ENCODE measurements at regions of chr22 and their contacts with region 1.

Region 1: DNA sequence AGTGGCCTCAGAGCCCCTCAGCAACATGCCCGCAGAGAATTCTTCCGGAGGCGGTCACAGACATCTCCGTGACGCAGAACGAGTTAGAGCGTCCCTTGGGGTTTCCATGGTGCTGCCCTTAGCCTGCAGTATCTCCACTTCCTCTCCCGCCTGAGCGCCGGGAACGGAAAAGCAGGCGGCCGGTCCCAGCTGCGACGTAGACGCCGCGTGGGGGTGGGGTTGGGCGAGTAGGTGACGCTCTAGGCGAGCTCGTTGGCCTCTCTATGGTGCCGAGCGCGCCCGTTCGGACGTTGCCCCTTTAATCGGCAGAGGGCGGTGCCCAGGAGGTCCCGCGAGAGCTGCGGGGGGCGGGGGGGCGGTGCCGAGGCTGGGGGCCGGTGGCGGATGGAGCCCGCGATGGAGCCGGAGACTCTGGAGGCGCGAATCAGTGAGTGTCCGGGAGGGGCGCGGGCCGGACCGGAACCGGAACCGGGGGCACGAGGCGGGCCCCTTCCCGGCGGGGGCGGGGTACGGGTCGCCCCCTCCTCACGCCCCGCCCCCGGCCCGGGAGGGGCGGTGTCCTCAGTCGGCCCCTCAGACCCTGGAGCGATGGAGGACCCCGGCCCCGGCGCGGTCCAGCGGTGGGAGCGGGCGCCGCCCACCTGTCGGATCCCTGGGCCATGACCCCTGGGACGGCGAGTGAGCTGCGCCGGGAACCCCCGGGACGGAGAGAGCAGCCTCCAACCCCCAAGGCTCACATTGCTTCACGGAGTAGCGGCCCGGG is at the start of gene GGA1:
- DNase-seq: peak; percentile 97 to 99 (median 98)
- H3K4me3 ChIP-seq: peak within 1 kb of the TSS; percentile 30 to 85
- H3K4me3 Mint-ChIP-seq: peak within 1 kb of the TSS; percentile 90 to 98 (median 94)
- H3K27ac ChIP-seq: peak within 1 kb of the TSS; percentile 88
- H3K27ac Mint-ChIP-seq: peak within 1 kb of the TSS; percentile 94 to 99 (median 98)
- H3K4me1 ChIP-seq: peaks cover 64% of the 10 kb centered on the region
- H3K4me1 Mint-ChIP-seq: peaks cover 35 to 68% (median 50%) of the 10 kb centered on the region in 4 donors
- H3K27me3 ChIP-seq: no peaks in the 10 kb centered on the region
- H3K27me3 Mint-ChIP-seq: no peaks in the 10 kb centered on the region
- total RNA-seq, gene GGA1: 108 to 109 TPM

Region 2: GRCh38 chr22:37486224-37486845 is 122.3 kb before region 1 on chr22 and contains the start of gene MFNG:
- CTCF ChIA-PET with region 1: interaction called, 16 read pairs
- POLR2A ChIA-PET with region 1: interaction called, 77 read pairs
- intact Hi-C with region 1: loop called (anchors 1 kb)
- DNase-seq: peak; percentile 61 to 84 (median 64)
- H3K4me3 ChIP-seq: peak within 1 kb of the TSS; percentile 85 to 87
- H3K4me3 Mint-ChIP-seq: peak within 1 kb of the TSS; percentile 89 to 98 (median 96)
- H3K27ac ChIP-seq: peak within 1 kb of the TSS; percentile 85
- H3K27ac Mint-ChIP-seq: peak within 1 kb of the TSS; percentile 94 to 98 (median 97)
- H3K4me1 ChIP-seq: peaks cover 63% of the 10 kb centered on the region
- H3K4me1 Mint-ChIP-seq: peaks cover 39 to 87% (median 57%) of the 10 kb centered on the region in 4 donors
- H3K27me3 ChIP-seq: no peaks in the 10 kb centered on the region
- H3K27me3 Mint-ChIP-seq: no peaks in the 10 kb centered on the region
- total RNA-seq, gene MFNG: 213 to 218 TPM

Region 3: DNA sequence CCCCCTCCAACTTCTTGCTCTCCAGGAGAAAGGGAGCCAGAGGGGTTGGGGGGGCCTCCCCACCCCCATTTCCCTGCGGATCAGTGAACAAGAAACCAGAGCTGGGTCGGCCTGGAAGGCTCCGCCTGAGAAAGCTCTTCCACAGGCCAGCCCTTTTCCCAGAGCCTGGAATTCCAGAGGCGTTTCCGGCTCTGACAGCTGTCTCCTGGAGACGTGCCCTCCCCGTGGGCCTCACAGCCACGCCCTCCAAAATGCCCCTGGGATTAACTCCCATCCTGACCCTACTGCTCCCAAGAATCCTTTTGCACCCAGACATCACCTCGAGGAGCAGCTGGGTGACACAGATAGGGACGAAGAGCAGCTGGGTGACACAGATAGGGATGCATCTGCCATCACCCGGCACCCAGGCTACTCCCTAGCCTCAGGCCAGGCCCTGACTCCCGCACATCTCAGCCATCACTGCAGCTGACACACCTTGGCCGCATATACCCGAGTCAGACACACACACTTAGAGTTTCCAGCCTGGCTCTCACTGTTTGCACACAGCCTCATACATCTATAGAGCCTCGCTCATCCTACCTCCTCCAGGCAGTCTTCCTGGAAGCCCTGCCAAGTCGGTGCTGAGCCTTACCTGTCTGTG is 56.0 kb before region 1 on chr22:
- CTCF ChIA-PET with region 1: no interaction called
- POLR2A ChIA-PET with region 1: no interaction called
- intact Hi-C with region 1: no loop called
- DNase-seq: no peak
- H3K4me3 ChIP-seq: no peak overlapping the region
- H3K4me3 Mint-ChIP-seq: no peak overlapping the region
- H3K27ac ChIP-seq: no peak overlapping the region
- H3K27ac Mint-ChIP-seq: no peak overlapping the region
- H3K4me1 ChIP-seq: no peaks in the 10 kb centered on the region
- H3K4me1 Mint-ChIP-seq: no peaks in the 10 kb centered on the region
- H3K27me3 ChIP-seq: no peaks in the 10 kb centered on the region
- H3K27me3 Mint-ChIP-seq: peaks cover 7 to 17% of the 10 kb centered on the region in 2 donors

Region 4: DNA sequence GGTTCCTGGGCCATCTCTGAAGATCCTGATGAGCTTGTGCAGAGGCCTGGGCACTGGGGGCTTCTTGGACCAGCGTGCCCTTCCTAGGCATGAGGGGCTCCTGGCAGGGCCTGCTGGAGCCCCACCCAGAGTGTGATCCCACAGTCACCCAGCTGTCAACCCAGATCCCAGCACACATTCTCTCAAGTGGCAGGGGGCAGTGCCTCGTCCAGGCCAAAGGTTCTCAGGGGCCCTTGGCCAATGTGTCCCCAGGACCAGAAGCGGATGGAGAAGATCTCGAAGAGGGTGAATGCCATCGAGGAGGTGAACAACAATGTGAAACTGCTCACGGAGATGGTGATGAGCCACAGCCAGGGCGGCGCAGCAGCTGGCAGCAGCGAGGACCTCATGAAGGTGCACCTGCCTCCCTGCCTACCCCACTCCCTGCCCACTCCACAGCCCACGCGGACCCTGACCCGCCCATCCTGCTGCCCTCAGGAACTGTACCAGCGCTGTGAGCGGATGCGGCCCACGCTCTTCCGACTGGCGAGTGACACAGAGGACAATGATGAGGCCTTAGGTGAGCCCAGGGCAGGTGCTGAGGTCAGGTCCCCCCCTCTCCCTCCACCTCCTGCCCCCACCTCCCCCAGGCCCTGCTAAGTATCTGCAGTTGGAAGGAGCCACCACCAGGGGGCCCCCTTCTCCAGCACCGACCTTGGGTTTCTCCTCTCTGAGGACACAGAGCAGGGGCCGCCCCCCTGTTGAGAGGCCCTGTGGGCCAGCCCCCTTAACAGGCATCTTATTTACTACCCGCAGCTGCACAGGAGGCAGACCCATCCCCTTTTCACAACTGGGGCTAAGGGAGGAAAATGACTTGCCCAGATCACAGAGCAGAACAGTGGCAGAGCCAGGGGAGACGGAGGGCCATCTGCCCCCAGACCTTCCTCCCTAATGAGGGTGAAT is 14.7 kb after region 1 on chr22:
- CTCF ChIA-PET with region 1: interaction called, 28 read pairs
- POLR2A ChIA-PET with region 1: interaction called, 55 read pairs
- intact Hi-C with region 1: loop called (anchors 1 kb)
- DNase-seq: peak; percentile 72 to 79 (median 75)
- H3K4me3 ChIP-seq: no peak overlapping the region
- H3K4me3 Mint-ChIP-seq: peak overlapping the region in 7 of 8 donors; percentile 9 to 85 (median 60)
- H3K27ac ChIP-seq: peak overlapping the region; percentile 52
- H3K27ac Mint-ChIP-seq: peak overlapping the region; percentile 92 to 97 (median 94)
- H3K4me1 ChIP-seq: peaks cover 52% of the 10 kb centered on the region
- H3K4me1 Mint-ChIP-seq: peaks cover 19 to 53% (median 37%) of the 10 kb centered on the region in 4 donors
- H3K27me3 ChIP-seq: no peaks in the 10 kb centered on the region
- H3K27me3 Mint-ChIP-seq: no peaks in the 10 kb centered on the region

Region 5: GRCh38 chr22:37658133-37659065 is 49.7 kb after region 1 on chr22 and contains the start of gene PDXP:
- CTCF ChIA-PET with region 1: interaction called, 9 read pairs
- POLR2A ChIA-PET with region 1: interaction called, 59 read pairs
- intact Hi-C with region 1: loop called (anchors 1 kb)
- DNase-seq: peak; percentile 98
- H3K4me3 ChIP-seq: peak within 1 kb of the TSS; percentile 27 to 57
- H3K4me3 Mint-ChIP-seq: peak within 1 kb of the TSS; percentile 82 to 94 (median 86)
- H3K27ac ChIP-seq: peak within 1 kb of the TSS; percentile 63
- H3K27ac Mint-ChIP-seq: peak within 1 kb of the TSS; percentile 85 to 98 (median 93)
- H3K4me1 ChIP-seq: peaks cover 33% of the 10 kb centered on the region
- H3K4me1 Mint-ChIP-seq: peaks cover 29 to 49% (median 37%) of the 10 kb centered on the region in 4 donors
- H3K27me3 ChIP-seq: no peaks in the 10 kb centered on the region
- H3K27me3 Mint-ChIP-seq: no peaks in the 10 kb centered on the region
- total RNA-seq, gene PDXP: 7.3 to 9.8 TPM

Region 6: GRCh38 chr22:37745548-37746365 is 137.1 kb after region 1 on chr22:
- CTCF ChIA-PET with region 1: interaction called, 3 read pairs
- POLR2A ChIA-PET with region 1: no interaction called
- intact Hi-C with region 1: loop called (anchors 1 kb)
- DNase-seq: peak; percentile 79 to 86 (median 82)
- H3K4me3 ChIP-seq: peak overlapping the region; percentile 45 to 62
- H3K4me3 Mint-ChIP-seq: peak overlapping the region; percentile 86 to 97 (median 94)
- H3K27ac ChIP-seq: peak overlapping the region; percentile 60
- H3K27ac Mint-ChIP-seq: peak overlapping the region; percentile 82 to 96 (median 92)
- H3K4me1 ChIP-seq: peaks cover 22% of the 10 kb centered on the region
- H3K4me1 Mint-ChIP-seq: peaks cover 6 to 31% (median 25%) of the 10 kb centered on the region in 4 donors
- H3K27me3 ChIP-seq: no peaks in the 10 kb centered on the region
- H3K27me3 Mint-ChIP-seq: no peaks in the 10 kb centered on the region

Region 7: DNA sequence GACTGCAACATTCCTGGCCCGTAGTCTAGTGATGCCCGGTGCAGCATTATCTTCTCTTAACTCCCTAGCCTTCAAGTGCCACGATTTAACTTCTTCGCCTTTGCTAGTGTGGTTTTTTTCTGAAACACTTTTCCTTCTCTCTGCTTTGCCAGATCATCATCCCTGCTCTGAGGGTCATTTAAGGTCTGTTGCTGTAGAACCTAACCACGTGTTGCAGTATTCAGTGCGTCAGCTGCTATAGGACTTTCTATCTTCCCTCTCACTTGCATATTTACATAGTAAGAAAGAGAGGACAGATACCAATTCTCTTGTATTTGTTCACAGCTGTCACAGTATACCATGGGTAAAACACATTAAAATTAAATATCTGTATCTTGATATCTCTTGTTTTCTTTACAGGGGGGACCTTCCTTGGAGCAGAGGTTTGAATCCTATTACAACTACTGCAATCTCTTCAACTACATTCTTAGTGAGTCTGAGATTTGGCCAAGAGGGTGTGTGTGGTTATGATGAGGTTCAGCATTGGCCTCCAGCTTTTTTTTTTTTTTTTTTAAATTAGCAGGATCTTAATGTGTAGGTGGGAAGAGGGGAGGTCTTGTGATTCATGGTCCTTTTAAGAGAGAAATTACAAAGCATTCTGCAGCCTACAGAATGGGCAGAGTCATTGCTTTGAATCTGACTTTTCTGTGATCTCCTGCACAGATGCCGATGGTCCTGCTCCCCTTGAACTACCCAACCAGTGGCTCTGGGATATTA is 254.1 kb after region 1 on chr22:
- CTCF ChIA-PET with region 1: interaction called, 13 read pairs
- POLR2A ChIA-PET with region 1: interaction called, 3 read pairs
- intact Hi-C with region 1: loop called (anchors 1 kb)
- DNase-seq: no peak
- H3K4me3 ChIP-seq: no peak overlapping the region
- H3K4me3 Mint-ChIP-seq: no peak overlapping the region
- H3K27ac ChIP-seq: no peak overlapping the region
- H3K27ac Mint-ChIP-seq: peak overlapping the region in 3 of 7 donors; percentile 38 to 74 (median 53)
- H3K4me1 ChIP-seq: peaks cover 5% of the 10 kb centered on the region
- H3K4me1 Mint-ChIP-seq: peaks cover 2 to 5% (median 4%) of the 10 kb centered on the region in 4 donors
- H3K27me3 ChIP-seq: no peaks in the 10 kb centered on the region
- H3K27me3 Mint-ChIP-seq: no peaks in the 10 kb centered on the region

Measured in CD4-positive, alpha-beta memory T cell (primary cell).